HepG2 (cell line): ENCODE measurements at regions of chr2 and their contacts with region 1.

Region 1: DNA sequence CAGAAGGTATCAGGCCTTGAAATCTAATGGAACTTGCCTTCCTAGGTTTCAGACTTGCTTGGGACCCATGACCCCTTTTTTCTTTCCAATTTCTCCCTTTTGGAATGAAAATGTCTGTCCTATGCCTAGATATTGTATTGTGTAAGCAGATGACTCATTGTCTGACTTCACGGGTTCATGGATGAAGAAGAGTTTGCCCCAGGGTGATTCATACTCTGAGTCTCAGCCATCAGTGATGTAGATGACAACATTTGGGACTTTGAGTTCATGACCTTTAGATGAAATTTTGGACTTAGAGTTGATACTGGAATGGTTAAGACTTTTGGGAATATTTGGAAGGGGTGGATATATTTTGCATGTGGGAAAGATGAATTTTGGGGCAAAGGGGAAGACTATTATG is 11.2 kb upstream of the SCYGR5 start:
- DNase-seq: peak; percentile 87
- ATAC-seq: peak; percentile 70
- H3K4me3 ChIP-seq: no peak overlapping the region
- H3K27ac ChIP-seq: no peak overlapping the region
- H3K4me1 ChIP-seq: peaks cover 46% of the 10 kb centered on the region
- H3K27me3 ChIP-seq: no peaks in the 10 kb centered on the region
- CTCF ChIP-seq: no peak
- EP300 ChIP-seq: peak in 1 of 2 experiments; percentile 57; a peak in 2 of 4 replicates
- POLR2A ChIP-seq: no peak
- RAD21 ChIP-seq: no peak

Region 2: GRCh38 chr2:227125506-227125905 is 529.9 kb before region 1 on chr2:
- CTCF ChIA-PET with region 1: no interaction called
- POLR2A ChIA-PET with region 1: no interaction called
- in situ Hi-C with region 1: no loop called
- intact Hi-C with region 1: loop called (anchors 10 kb)
- DNase-seq: peak; percentile 25
- ATAC-seq: peak; percentile 85
- H3K4me3 ChIP-seq: no peak overlapping the region
- H3K27ac ChIP-seq: no peak overlapping the region
- H3K4me1 ChIP-seq: no peaks in the 10 kb centered on the region
- H3K27me3 ChIP-seq: peaks cover 0 to 11% of the 10 kb centered on the region in 2 experiments; a peak in 2 of 5 replicates
- CTCF ChIP-seq: peak; percentile 63
- EP300 ChIP-seq: no peak
- POLR2A ChIP-seq: no peak
- RAD21 ChIP-seq: no peak

Region 3: GRCh38 chr2:227862227-227862740 is 206.8 kb after region 1 on chr2:
- CTCF ChIA-PET with region 1: no interaction called
- POLR2A ChIA-PET with region 1: no interaction called
- in situ Hi-C with region 1: no loop called
- intact Hi-C with region 1: loop called (anchors 1 kb)
- DNase-seq: peak; percentile 65
- ATAC-seq: no peak
- H3K4me3 ChIP-seq: peak overlapping the region in 1 of 3 experiments; percentile 27; a peak in 2 of 6 replicates
- H3K27ac ChIP-seq: no peak overlapping the region
- H3K4me1 ChIP-seq: peaks cover 33% of the 10 kb centered on the region
- H3K27me3 ChIP-seq: peaks cover 4 to 30% of the 10 kb centered on the region in 2 experiments; a peak in 4 of 5 replicates
- CTCF ChIP-seq: peak; percentile 74
- EP300 ChIP-seq: no peak
- POLR2A ChIP-seq: no peak
- RAD21 ChIP-seq: peak; percentile 31; the same call in 1 of the 2 replicates

Region 4: DNA sequence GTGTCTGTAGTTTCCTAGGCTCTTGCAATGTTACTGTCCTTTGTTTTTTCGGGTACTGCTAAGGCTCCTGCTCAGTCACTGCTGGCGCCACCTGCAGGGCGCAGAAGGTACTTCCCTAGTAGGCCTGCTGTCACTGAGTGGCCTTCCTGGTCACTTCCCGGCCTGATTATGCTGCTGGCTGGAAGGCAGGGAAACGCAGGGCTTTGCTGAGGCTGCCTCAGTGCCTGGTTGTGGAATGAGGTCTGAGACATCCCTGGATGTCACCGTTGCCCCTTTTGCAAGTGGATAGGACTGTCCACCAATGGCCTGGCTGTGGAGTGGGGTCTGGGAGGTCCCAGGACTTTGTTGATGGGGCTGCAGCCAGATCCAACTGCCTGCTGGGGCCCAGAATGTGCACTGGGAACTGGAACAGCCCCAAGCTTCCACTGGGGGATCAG is 229.1 kb after region 1 on chr2:
- CTCF ChIA-PET with region 1: interaction called, 12 read pairs
- POLR2A ChIA-PET with region 1: no interaction called
- in situ Hi-C with region 1: loop called (anchors 10 kb)
- intact Hi-C with region 1: loop called (anchors 1 kb)
- DNase-seq: peak; percentile 75
- ATAC-seq: peak; percentile 100
- H3K4me3 ChIP-seq: no peak overlapping the region; a peak in 1 of 6 replicates
- H3K27ac ChIP-seq: no peak overlapping the region
- H3K4me1 ChIP-seq: peaks cover 20% of the 10 kb centered on the region; the same call in 1 of the 2 replicates
- H3K27me3 ChIP-seq: no peaks in the 10 kb centered on the region; a peak in 1 of 5 replicates
- CTCF ChIP-seq: peak; percentile 99
- EP300 ChIP-seq: no peak
- POLR2A ChIP-seq: no peak
- RAD21 ChIP-seq: peak; percentile 80